GM12878 (cell line): ENCODE measurements at regions of chr16 and their contacts with region 1.

Region 1: DNA sequence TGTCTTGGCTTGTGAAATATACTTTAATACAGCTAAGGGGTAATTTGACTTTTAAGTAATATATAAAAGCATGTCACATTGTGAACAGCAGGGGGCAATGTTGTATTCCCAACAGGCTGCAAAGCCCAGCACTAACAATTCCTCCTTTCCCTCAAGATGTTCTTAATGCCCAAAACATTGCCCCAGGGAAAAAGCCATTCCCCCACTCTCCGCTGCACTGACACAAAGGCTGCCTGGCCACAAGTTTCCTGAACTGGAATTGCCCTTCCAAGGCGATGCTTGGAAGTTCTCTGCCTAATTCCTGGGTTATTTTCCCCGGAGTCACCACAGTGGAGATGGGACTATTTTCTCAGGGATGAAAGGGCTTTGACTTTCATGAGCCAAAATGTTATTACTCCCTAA is 27.2 kb downstream of the CLEC16A start:
- DNase-seq: no peak
- ATAC-seq: peak; percentile 68
- H3K4me3 ChIP-seq: no peak overlapping the region
- H3K27ac ChIP-seq: no peak overlapping the region
- H3K4me1 ChIP-seq: peaks cover 4% of the 10 kb centered on the region
- H3K27me3 ChIP-seq: no peaks in the 10 kb centered on the region
- CTCF ChIP-seq: peak; percentile 48 to 83 (median 68)
- EP300 ChIP-seq: no peak
- POLR2A ChIP-seq: no peak
- RAD21 ChIP-seq: peak; percentile 82

Region 2: GRCh38 chr16:10935226-10935915 is 36.2 kb before region 1 on chr16:
- CTCF ChIA-PET with region 1: no interaction called
- POLR2A ChIA-PET with region 1: no interaction called
- RAD21 ChIA-PET with region 1: no interaction called
- SMC1A ChIA-PET with region 1: no interaction called
- in situ Hi-C with region 1: no loop called
- intact Hi-C with region 1: no loop called
- DNase-seq: no peak
- ATAC-seq: no peak
- H3K4me3 ChIP-seq: no peak overlapping the region
- H3K27ac ChIP-seq: no peak overlapping the region
- H3K4me1 ChIP-seq: peaks cover 38% of the 10 kb centered on the region
- H3K27me3 ChIP-seq: no peaks in the 10 kb centered on the region
- CTCF ChIP-seq: no peak
- EP300 ChIP-seq: no peak
- POLR2A ChIP-seq: no peak
- RAD21 ChIP-seq: no peak

Region 3: DNA sequence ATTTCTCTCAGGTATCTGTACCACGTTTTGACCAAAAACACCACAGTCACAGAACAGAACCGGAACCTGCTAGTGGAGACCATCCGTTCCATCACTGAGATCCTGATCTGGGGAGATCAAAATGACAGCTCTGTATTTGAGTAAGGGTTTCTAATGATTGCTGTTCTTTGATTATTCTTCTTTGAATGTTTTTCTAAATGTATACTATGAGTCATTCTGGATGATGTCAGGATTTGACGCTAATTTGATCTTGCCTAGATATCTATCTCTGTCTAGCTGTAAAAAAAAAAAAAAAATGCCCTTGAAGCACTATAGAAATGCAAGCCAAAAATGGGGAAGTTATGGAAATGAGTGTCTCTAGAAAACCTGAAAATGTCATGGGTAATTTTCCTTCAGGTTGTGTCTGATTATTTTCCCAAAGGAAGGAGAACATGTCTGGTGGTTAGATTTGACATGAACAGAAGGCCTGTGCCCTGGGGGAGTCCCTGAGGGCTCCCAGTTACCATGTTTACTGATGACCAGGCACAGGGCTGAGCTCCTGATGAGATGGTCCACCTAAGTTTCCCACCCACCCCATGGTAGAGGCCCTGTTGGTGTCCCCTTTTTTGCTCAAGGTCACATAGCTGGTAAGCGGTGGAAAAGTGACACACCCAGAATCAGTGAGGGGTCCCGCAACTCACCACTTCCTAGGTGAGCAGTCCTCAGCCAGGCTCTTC is 13.6 kb before region 1 on chr16:
- CTCF ChIA-PET with region 1: interaction called, 107 read pairs
- POLR2A ChIA-PET with region 1: no interaction called
- RAD21 ChIA-PET with region 1: interaction called, 40 read pairs
- SMC1A ChIA-PET with region 1: interaction called, 10 read pairs
- in situ Hi-C with region 1: no loop called
- intact Hi-C with region 1: no loop called
- DNase-seq: no peak
- ATAC-seq: peak; percentile 75
- H3K4me3 ChIP-seq: no peak overlapping the region
- H3K27ac ChIP-seq: peak overlapping the region; percentile 70
- H3K4me1 ChIP-seq: peaks cover 34% of the 10 kb centered on the region
- H3K27me3 ChIP-seq: no peaks in the 10 kb centered on the region
- CTCF ChIP-seq: no peak
- EP300 ChIP-seq: peak; percentile 30 to 47; a peak in 2 of 4 replicates
- POLR2A ChIP-seq: no peak
- RAD21 ChIP-seq: no peak

Region 4: DNA sequence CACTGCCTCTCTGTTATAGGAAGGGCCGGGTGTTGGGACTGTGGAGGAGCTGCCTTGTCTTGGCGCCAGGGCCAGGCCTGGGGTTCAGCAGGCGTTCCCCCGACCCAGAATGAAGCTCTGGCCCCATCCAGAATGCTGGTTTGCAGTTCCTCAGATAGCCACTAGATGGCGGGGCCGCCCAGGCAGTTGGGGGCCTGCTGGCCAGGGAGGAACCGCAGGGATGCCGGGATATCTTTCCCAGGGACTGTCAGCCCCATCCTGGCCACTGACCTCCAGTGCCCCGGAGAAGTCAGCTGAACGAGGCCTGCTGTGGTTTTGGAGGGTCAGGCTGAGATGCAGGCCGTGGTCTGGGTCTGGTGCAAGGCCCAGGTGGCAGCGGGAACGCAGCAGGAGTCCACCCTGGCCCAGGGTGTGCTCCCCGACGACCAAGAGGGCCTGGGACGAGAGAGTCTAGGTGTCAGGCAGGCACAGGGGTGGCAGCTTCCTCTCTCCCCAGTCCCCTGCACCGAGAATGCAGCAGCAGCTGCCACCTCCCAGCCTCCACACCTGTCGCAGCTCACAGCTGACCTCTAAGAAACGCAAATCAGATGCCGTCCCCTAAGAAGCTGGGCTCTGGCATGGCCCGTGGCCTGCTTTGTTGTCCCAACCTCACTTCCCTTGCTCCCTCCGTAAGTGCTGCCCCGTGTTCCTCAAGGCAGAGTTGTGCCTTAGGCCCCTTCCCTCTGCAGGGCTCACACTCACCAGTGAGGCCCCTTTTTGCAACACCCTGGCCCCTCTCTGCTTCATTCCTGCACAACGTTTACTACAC is 424.9 kb after region 1 on chr16:
- CTCF ChIA-PET with region 1: interaction called, 4 read pairs
- POLR2A ChIA-PET with region 1: no interaction called
- RAD21 ChIA-PET with region 1: interaction called, 3 read pairs
- SMC1A ChIA-PET with region 1: no interaction called
- in situ Hi-C with region 1: no loop called
- intact Hi-C with region 1: loop called (anchors 5 kb)
- DNase-seq: no peak
- ATAC-seq: peak; percentile 90
- H3K4me3 ChIP-seq: no peak overlapping the region
- H3K27ac ChIP-seq: no peak overlapping the region
- H3K4me1 ChIP-seq: no peaks in the 10 kb centered on the region
- H3K27me3 ChIP-seq: no peaks in the 10 kb centered on the region; a peak in 1 of 4 replicates
- CTCF ChIP-seq: peak; percentile 97 to 98 (median 97); a peak in 5 of 6 replicates
- EP300 ChIP-seq: no peak
- POLR2A ChIP-seq: no peak
- RAD21 ChIP-seq: peak; percentile 97